Head of caudate nucleus (tissue), 42 donors: ENCODE measurements at regions of chr15 and their contacts with region 1.

Region 1: GRCh38 chr15:90648137-90649070 is 68.7 kb upstream of the BLM start:
- DNase-seq: peak in 36 of 42 donors; percentile 24 to 90 (median 68)

Region 2: GRCh38 chr15:90598031-90598577 is 50.3 kb before region 1 on chr15:
- intact Hi-C with region 1: no loop called
- DNase-seq: peak in 37 of 42 donors; percentile 35 to 87 (median 65)

Region 3: DNA sequence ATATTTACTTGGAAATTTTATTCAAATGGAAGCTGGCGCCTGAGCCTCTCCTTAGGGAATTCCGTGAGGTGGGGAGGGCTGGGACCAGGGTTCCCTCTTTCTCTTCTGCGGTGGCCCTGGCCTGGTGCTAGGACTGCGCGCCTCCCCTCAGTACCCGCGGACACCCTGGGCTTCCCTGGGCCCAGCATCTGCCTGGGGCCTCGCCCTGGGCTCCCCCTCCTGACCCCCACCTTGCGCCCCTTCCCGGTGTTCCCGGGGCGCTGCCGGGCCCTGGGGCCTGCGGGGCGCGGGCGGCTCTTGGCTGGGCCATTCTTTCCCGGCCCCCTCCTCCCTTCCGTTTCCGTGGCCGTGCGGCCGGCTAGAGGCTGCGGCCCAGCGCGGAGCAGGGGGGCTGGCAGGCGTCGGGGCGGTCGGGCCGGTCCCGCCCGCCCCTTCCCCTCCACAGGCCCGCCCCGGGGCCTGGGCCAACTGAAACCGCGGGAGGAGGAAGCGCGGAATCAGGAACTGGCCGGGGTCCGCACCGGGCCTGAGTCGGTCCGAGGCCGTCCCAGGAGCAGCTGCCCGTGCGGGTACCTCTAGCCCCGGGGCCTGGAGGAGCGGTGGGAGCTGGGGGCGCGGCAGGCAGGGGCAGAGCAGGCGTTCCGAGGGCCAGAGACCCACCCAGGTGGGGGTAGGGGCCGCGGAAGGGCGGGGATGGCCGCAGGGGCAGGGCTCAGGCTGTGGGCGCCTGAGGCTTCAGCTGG is 235.7 kb after region 1 on chr15 and contains the start of gene FES:
- intact Hi-C with region 1: loop called (anchors 2 kb)
- DNase-seq: peak in 15 of 42 donors; percentile 20 to 71 (median 47)